MCF 10A (cell line): ENCODE measurements at regions of chr11 and their contacts with region 1.

Region 1: DNA sequence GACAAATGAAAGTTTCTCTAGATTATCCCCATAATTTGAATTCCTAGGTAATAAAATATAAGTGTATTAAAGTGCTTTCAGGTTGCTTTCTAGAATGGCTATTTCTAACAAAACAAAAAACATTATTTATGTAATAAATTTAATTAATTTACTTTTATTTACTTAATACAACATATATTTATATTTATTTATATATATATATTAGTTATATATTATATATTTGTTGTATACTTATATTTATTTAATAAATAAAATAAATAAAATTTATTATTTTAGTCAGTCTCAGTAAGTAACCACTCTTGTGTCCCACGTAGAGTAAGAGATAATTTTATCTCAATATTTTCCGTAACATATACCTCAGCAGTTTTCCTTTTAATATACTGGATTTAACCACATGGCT is 1031.6 kb upstream of the CNTN5 start:
- DNase-seq: no peak
- H3K4me3 Mint-ChIP-seq: no peak overlapping the region
- H3K27ac Mint-ChIP-seq: no peak overlapping the region
- H3K4me1 Mint-ChIP-seq: no peaks in the 10 kb centered on the region
- H3K27me3 Mint-ChIP-seq: peaks cover 79% of the 10 kb centered on the region
- CTCF ChIP-seq: no peak

Region 2: GRCh38 chr11:97092823-97093222 is 896.3 kb before region 1 on chr11:
- CTCF ChIA-PET with region 1: no interaction called
- POLR2A ChIA-PET with region 1: no interaction called
- intact Hi-C with region 1: loop called (anchors 5 kb)
- DNase-seq: no peak
- H3K4me3 Mint-ChIP-seq: no peak overlapping the region
- H3K27ac Mint-ChIP-seq: no peak overlapping the region
- H3K4me1 Mint-ChIP-seq: no peaks in the 10 kb centered on the region
- H3K27me3 Mint-ChIP-seq: peaks cover 26% of the 10 kb centered on the region
- CTCF ChIP-seq: no peak

Region 3: GRCh38 chr11:98027652-98028051 is 38.5 kb after region 1 on chr11:
- CTCF ChIA-PET with region 1: no interaction called
- POLR2A ChIA-PET with region 1: no interaction called
- intact Hi-C with region 1: no loop called
- DNase-seq: no peak
- H3K4me3 Mint-ChIP-seq: no peak overlapping the region
- H3K27ac Mint-ChIP-seq: no peak overlapping the region
- H3K4me1 Mint-ChIP-seq: no peaks in the 10 kb centered on the region
- H3K27me3 Mint-ChIP-seq: peaks cover 62% of the 10 kb centered on the region
- CTCF ChIP-seq: no peak